Naive thymus-derived CD4-positive, alpha-beta T cell (primary cell): ENCODE measurements at regions of chr2 and their contacts with region 1.

Region 1: DNA sequence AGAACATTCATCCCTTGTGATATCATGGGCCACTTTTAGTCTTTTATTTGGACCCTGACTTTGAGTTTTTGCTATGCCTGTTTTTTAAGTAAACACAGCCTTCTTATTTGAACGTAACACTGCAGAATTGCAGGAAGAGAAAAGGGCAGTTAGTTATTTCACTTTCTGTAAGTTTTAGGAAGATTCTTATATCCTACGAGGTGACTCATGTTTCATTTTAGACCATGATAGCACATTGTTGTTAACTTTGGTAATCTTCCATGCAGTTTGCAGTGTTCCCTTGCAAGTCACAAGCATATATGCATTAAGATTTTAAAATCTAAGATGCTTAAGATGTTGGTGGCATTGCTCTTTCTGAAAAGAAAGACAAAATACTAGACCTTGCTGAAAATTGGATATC is 128.6 kb upstream of the EPC2 start:
- DNase-seq: no peak
- ATAC-seq: no peak
- H3K4me3 ChIP-seq: no peak overlapping the region
- H3K4me3 Mint-ChIP-seq: peak overlapping the region in 1 of 10 donors; percentile 58
- H3K27ac ChIP-seq: no peak overlapping the region
- H3K27ac Mint-ChIP-seq: peak overlapping the region in 1 of 9 donors; percentile 78
- H3K4me1 ChIP-seq: peaks cover 0 to 5% of the 10 kb centered on the region in 2 donors
- H3K4me1 Mint-ChIP-seq: peaks cover 9 to 30% (median 22%) of the 10 kb centered on the region in 7 donors
- H3K27me3 ChIP-seq: no peaks in the 10 kb centered on the region
- H3K27me3 Mint-ChIP-seq: no peaks in the 10 kb centered on the region

Region 2: GRCh38 chr2:148531669-148532428 is 15.9 kb after region 1 on chr2:
- CTCF ChIA-PET with region 1: no interaction called
- POLR2A ChIA-PET with region 1: no interaction called
- intact Hi-C with region 1: no loop called
- DNase-seq: no peak
- ATAC-seq: no peak
- H3K4me3 ChIP-seq: no peak overlapping the region
- H3K4me3 Mint-ChIP-seq: no peak overlapping the region
- H3K27ac ChIP-seq: no peak overlapping the region
- H3K27ac Mint-ChIP-seq: peak overlapping the region in 4 of 9 donors; percentile 1 to 98 (median 75)
- H3K4me1 ChIP-seq: peaks cover 11 to 55% of the 10 kb centered on the region in 2 donors
- H3K4me1 Mint-ChIP-seq: peaks cover 31 to 92% (median 80%) of the 10 kb centered on the region in 7 donors
- H3K27me3 ChIP-seq: no peaks in the 10 kb centered on the region
- H3K27me3 Mint-ChIP-seq: no peaks in the 10 kb centered on the region

Region 3: DNA sequence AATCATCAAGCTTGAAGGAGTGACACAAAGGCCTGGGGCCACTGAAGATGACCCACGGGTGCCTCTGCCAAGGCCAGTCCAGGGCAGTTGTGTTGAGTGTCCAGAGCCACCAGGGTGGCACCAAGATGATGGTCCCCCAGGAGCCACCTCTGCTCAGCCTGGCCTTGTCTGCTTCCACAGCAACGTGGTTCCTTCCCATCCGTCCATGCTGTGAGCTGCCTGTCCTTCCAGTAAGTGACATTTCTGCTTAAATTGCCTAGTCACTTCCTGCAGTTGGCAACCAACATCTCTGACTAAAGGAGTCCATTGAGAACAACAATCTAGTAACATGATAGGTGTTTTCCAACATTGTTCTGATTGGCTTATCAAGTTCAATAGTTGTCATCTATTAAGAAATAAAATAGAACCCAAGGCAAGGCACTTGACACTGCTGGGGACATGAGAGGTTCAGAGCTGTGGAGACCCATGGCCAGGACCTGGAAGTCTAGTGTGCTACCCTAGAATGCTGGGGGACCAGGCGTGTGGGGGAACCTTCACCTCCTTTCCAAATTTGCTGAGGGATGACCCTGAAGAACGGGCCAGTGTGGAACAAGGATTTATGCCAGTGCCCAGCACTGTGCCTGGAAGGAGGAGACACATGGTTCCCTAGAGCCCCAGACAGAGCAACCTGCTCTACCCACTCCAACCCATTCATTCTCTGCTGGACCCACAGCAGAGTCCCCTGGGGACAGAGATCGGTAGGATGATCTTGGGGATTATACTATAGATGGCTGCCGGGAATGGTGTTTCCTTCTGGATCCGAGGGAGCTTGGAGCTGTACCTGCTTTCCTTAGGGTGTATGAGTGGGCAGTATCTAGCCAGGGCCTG is 29.6 kb after region 1 on chr2:
- CTCF ChIA-PET with region 1: interaction called, 3 read pairs
- POLR2A ChIA-PET with region 1: no interaction called
- intact Hi-C with region 1: loop called in 1 of 2 experiments (anchors 2 kb)
- DNase-seq: peak in 1 of 9 donors; percentile 36
- ATAC-seq: peak; percentile 75
- H3K4me3 ChIP-seq: no peak overlapping the region
- H3K4me3 Mint-ChIP-seq: peak overlapping the region in 3 of 10 donors; percentile 32 to 58 (median 46)
- H3K27ac ChIP-seq: no peak overlapping the region
- H3K27ac Mint-ChIP-seq: peak overlapping the region in 4 of 9 donors; percentile 13 to 88 (median 44)
- H3K4me1 ChIP-seq: peaks cover 5 to 36% of the 10 kb centered on the region in 2 donors
- H3K4me1 Mint-ChIP-seq: peaks cover 22 to 70% (median 54%) of the 10 kb centered on the region in 7 donors
- H3K27me3 ChIP-seq: no peaks in the 10 kb centered on the region
- H3K27me3 Mint-ChIP-seq: peaks cover 0 to 2% (median 0%) of the 10 kb centered on the region in 5 donors

Region 4: GRCh38 chr2:149200109-149200520 is 684.1 kb after region 1 on chr2:
- CTCF ChIA-PET with region 1: no interaction called
- POLR2A ChIA-PET with region 1: no interaction called
- intact Hi-C with region 1: no loop called
- DNase-seq: no peak
- ATAC-seq: no peak
- H3K4me3 ChIP-seq: no peak overlapping the region
- H3K4me3 Mint-ChIP-seq: no peak overlapping the region
- H3K27ac ChIP-seq: no peak overlapping the region
- H3K27ac Mint-ChIP-seq: no peak overlapping the region
- H3K4me1 ChIP-seq: no peaks in the 10 kb centered on the region
- H3K4me1 Mint-ChIP-seq: no peaks in the 10 kb centered on the region
- H3K27me3 ChIP-seq: no peaks in the 10 kb centered on the region
- H3K27me3 Mint-ChIP-seq: peaks cover 0 to 6% (median 0%) of the 10 kb centered on the region in 5 donors